ENCODE measurements at regions of chr10 and their contacts with region 1.

Region 1: DNA sequence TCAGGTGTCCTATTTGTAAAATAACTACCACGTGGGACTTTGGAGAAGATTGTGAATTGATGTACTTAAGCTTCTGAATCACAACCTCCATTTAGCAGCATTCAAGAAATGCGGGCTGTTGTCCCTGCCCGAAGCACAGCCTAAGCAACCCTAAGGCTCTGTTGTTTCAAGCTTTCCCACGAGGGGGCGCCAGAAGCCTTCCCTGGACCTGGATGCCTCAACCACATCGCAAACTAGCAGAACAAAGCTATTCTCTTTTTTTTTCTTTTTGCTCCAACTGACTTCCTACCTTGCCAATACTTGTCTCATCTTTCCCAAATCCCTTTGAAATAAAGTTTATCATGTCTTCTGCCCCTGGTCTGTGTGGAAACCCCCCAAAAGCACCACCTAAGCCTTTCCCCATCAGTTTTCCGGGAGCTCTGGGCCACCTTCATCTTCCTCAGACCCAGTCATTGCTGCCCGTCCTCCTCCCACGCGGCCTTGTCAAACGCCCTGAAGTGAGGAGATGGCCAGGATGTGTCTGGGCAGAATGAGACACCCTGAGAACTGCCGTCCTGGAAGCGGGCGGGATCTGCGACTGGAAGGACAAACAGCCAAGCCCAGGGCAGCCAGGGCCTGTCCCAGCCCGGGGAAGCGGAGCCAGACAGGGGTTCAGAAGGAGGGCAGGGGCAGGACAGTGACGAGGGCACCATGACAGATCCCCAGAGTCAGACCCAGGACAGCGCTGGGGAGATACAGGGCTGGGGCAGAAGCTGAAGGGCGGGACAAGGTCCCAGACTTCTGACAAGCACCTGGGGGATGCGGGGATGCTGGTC is 112.7 kb downstream of the SLIT1 start:
- DNase-seq: peak; percentile 78 to 88
- H3K4me3 ChIP-seq: no peak overlapping the region
- H3K4me3 Mint-ChIP-seq: no peak overlapping the region
- H3K27ac Mint-ChIP-seq: no peak overlapping the region
- H3K4me1 ChIP-seq: no peaks in the 10 kb centered on the region
- H3K4me1 Mint-ChIP-seq: no peaks in the 10 kb centered on the region
- H3K27me3 ChIP-seq: peaks cover 2% of the 10 kb centered on the region
- H3K27me3 Mint-ChIP-seq: peaks cover 18% of the 10 kb centered on the region
- CTCF ChIP-seq: peak; percentile 92 to 95

Region 2: GRCh38 chr10:96673318-96674099 is 399.5 kb before region 1 on chr10:
- CTCF ChIA-PET with region 1: no interaction called
- POLR2A ChIA-PET with region 1: no interaction called
- intact Hi-C with region 1: no loop called
- DNase-seq: peak; percentile 84 to 87
- H3K4me3 ChIP-seq: no peak overlapping the region
- H3K4me3 Mint-ChIP-seq: peak overlapping the region; percentile 58
- H3K27ac Mint-ChIP-seq: peak overlapping the region; percentile 85
- H3K4me1 ChIP-seq: peaks cover 67% of the 10 kb centered on the region
- H3K4me1 Mint-ChIP-seq: peaks cover 34% of the 10 kb centered on the region
- H3K27me3 ChIP-seq: no peaks in the 10 kb centered on the region
- H3K27me3 Mint-ChIP-seq: no peaks in the 10 kb centered on the region
- CTCF ChIP-seq: no peak

Region 3: DNA sequence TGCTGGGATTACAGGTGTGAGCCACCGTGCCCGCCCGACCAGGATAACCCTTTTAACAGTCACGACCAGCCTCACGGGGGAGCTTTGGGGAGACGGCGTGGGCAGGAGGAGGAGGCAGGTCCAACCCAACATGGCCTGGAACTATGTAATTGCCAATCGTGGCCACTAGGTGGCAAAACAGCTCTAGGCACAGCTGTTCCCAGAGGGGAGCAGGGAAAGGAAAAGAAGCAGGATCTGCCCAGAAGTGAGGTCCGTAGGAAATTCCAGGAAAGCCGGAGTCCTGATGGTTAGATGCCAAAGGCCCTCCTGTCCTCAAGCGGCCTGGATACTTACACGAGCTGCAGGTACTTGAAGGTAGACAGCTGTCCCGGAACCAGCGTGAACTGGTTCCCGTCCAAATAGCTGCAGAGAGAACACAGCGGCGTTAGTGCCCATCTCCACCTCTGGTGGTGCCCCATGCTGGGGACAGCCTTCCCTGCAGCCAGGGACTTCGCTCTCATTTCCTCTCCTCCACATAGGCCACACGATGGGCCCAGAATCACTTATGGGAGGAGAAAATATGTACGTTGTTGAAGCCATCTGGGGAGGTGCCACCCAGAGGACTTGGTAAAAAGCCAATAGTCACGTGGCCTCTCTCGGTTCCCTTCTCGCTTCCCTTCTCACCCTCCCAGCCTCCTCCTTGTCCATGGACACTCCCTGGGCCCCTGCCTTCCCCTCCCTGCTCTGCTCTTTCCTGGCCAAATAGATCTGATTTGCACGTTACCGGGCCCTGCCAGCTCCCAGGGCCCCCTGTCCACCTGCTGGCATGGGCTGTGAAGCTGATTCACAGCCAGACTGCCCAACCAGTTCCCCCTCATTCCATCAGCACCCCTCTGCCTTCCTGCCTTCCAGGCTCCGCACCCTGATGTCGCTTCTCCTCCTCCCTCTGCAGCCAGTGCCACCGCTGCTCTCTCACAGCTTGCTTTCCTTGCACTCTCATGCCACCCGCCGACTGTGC is 35.4 kb before region 1 on chr10:
- CTCF ChIA-PET with region 1: interaction called, 17 read pairs
- POLR2A ChIA-PET with region 1: no interaction called
- intact Hi-C with region 1: no loop called
- DNase-seq: peak; percentile 82 to 85
- H3K4me3 ChIP-seq: no peak overlapping the region
- H3K4me3 Mint-ChIP-seq: no peak overlapping the region
- H3K27ac Mint-ChIP-seq: no peak overlapping the region
- H3K4me1 ChIP-seq: peaks cover 2% of the 10 kb centered on the region; the same call in 1 of the 2 replicates
- H3K4me1 Mint-ChIP-seq: no peaks in the 10 kb centered on the region
- H3K27me3 ChIP-seq: no peaks in the 10 kb centered on the region
- H3K27me3 Mint-ChIP-seq: peaks cover 13% of the 10 kb centered on the region
- CTCF ChIP-seq: peak; percentile 84 to 91

Region 4: DNA sequence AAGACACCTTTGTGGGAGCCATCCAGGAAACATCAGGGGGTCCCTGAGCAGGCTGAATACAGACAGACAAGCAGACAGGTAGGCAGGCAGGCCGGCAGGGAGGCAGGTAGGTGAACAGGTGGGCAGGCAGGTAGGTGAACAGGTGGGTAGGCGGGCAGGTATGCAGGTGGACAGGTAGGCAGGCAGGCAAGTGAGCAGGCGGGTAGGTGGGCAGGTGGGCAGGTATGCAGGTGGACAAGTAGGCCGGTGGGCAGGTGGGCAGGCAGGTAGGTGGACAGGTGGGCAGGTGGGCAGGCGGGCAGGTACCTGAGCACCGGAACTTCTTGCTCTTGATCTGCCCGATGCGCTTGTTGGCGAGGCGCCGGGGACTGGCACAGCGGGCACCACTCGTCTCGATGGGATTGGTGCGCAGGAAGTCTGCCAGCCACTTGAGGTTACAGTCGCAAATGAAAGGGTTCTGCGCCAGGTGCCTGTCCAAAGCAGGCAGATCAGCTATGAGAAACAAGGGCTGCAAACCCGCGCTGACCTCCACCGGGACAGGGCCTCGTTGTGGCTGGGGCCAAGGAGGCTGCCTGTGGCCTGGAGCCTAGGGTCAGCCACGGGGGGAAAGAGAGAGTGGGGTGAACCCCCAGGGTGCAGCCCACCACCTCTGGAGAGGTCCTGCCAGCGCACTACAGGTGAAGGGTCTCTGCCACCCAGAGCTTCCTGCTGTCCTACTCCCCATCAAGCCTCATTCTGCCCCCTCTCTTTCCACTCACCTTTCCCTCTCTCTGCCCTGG is 24.2 kb before region 1 on chr10:
- CTCF ChIA-PET with region 1: no interaction called
- POLR2A ChIA-PET with region 1: no interaction called
- intact Hi-C with region 1: no loop called
- DNase-seq: no peak
- H3K4me3 ChIP-seq: no peak overlapping the region
- H3K4me3 Mint-ChIP-seq: no peak overlapping the region
- H3K27ac Mint-ChIP-seq: no peak overlapping the region
- H3K4me1 ChIP-seq: no peaks in the 10 kb centered on the region
- H3K4me1 Mint-ChIP-seq: no peaks in the 10 kb centered on the region
- H3K27me3 ChIP-seq: no peaks in the 10 kb centered on the region; the same call in 1 of the 2 replicates
- H3K27me3 Mint-ChIP-seq: peaks cover 15% of the 10 kb centered on the region
- CTCF ChIP-seq: no peak

Region 5: DNA sequence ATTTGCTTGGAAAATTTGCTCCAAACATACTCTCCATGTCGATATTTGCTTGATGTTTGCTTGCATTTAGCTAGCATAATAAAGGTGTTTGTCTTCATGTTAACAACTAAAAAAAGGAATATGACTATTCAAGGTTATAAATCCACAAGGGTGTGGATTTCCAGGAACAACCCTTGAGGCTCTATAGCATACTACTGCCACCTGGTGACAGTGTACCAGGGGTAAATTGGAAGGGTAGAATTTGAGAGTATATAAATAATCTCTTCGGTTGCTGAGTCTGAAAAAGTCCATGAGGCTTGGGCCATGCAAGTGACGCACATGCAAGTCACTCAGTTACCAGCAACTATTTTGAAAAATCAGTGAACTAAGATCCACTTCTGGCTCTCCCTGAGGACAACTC is 44.3 kb after region 1 on chr10:
- CTCF ChIA-PET with region 1: interaction called, 18 read pairs
- POLR2A ChIA-PET with region 1: no interaction called
- intact Hi-C with region 1: loop called (anchors 1 kb)
- DNase-seq: peak in 1 of 2 experiments; percentile 29
- H3K4me3 ChIP-seq: no peak overlapping the region
- H3K4me3 Mint-ChIP-seq: no peak overlapping the region
- H3K27ac Mint-ChIP-seq: no peak overlapping the region
- H3K4me1 ChIP-seq: no peaks in the 10 kb centered on the region
- H3K4me1 Mint-ChIP-seq: no peaks in the 10 kb centered on the region
- H3K27me3 ChIP-seq: no peaks in the 10 kb centered on the region; the same call in 1 of the 2 replicates
- H3K27me3 Mint-ChIP-seq: peaks cover 19% of the 10 kb centered on the region
- CTCF ChIP-seq: peak; percentile 31 to 32

Region 6: DNA sequence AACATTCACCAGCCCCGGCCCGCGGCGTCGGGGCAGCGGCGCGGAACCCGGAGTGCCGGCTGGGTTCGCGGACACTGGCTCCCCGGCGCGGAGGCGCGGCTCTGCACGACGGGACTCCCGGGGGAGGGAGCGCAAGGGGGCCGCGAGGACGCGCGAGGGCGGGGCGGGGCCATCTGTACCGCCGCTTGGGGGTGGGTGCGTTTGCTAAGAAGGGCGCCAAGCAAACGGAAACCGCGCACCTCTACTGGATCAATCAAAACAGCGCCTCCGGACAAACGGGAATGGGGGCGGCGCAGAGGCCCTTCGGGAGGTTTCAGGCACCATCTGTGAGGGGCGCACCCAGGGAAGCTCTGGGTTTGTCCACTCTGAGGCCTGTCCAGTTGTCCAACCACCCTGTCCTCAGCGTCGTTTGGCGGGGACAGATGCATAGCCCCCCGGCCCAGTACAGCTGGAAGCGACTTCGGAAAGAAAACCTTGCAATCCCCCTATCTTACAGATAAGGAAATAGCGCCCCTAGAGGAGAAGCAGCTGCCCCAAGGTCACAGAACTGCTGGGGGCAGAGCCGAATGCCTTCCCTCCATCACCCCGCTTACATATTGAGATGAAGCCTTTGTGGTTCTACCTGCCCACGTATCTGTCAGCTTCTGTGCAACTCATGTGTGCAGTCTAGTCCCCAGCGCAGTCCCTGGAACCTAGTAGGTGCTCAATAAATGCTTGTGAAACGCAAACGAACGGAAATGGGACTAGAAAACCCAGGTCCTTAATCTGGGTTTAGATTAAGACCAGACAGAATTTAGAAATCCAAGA is 123.4 kb after region 1 on chr10:
- CTCF ChIA-PET with region 1: interaction called, 18 read pairs
- POLR2A ChIA-PET with region 1: no interaction called
- intact Hi-C with region 1: loop called (anchors 5 kb)
- DNase-seq: peak; percentile 62 to 73
- H3K4me3 ChIP-seq: peak overlapping the region; percentile 41
- H3K4me3 Mint-ChIP-seq: peak overlapping the region; percentile 65
- H3K27ac Mint-ChIP-seq: no peak overlapping the region
- H3K4me1 ChIP-seq: no peaks in the 10 kb centered on the region
- H3K4me1 Mint-ChIP-seq: no peaks in the 10 kb centered on the region
- H3K27me3 ChIP-seq: no peaks in the 10 kb centered on the region
- H3K27me3 Mint-ChIP-seq: peaks cover 4% of the 10 kb centered on the region
- CTCF ChIP-seq: peak; percentile 88 to 91

Region 7: GRCh38 chr10:97210543-97210961 is 137.5 kb after region 1 on chr10:
- CTCF ChIA-PET with region 1: interaction called, 65 read pairs
- POLR2A ChIA-PET with region 1: no interaction called
- intact Hi-C with region 1: loop called (anchors 1 kb)
- DNase-seq: peak; percentile 68 to 81
- H3K4me3 ChIP-seq: no peak overlapping the region
- H3K4me3 Mint-ChIP-seq: no peak overlapping the region
- H3K27ac Mint-ChIP-seq: no peak overlapping the region
- H3K4me1 ChIP-seq: no peaks in the 10 kb centered on the region
- H3K4me1 Mint-ChIP-seq: no peaks in the 10 kb centered on the region
- H3K27me3 ChIP-seq: no peaks in the 10 kb centered on the region; the same call in 1 of the 2 replicates
- H3K27me3 Mint-ChIP-seq: peaks cover 2% of the 10 kb centered on the region
- CTCF ChIP-seq: peak; percentile 92 to 98

Region 8: GRCh38 chr10:97234400-97234799 is 161.3 kb after region 1 on chr10:
- CTCF ChIA-PET with region 1: interaction called, 13 read pairs
- POLR2A ChIA-PET with region 1: no interaction called
- intact Hi-C with region 1: loop called (anchors 5 kb)
- DNase-seq: peak in 1 of 2 experiments; percentile 42
- H3K4me3 ChIP-seq: no peak overlapping the region
- H3K4me3 Mint-ChIP-seq: no peak overlapping the region
- H3K27ac Mint-ChIP-seq: no peak overlapping the region
- H3K4me1 ChIP-seq: no peaks in the 10 kb centered on the region
- H3K4me1 Mint-ChIP-seq: no peaks in the 10 kb centered on the region
- H3K27me3 ChIP-seq: no peaks in the 10 kb centered on the region
- H3K27me3 Mint-ChIP-seq: no peaks in the 10 kb centered on the region
- CTCF ChIP-seq: peak; percentile 58 to 66